ENCODE measurements at regions of chr3 and their contacts with region 1.

Region 1: DNA sequence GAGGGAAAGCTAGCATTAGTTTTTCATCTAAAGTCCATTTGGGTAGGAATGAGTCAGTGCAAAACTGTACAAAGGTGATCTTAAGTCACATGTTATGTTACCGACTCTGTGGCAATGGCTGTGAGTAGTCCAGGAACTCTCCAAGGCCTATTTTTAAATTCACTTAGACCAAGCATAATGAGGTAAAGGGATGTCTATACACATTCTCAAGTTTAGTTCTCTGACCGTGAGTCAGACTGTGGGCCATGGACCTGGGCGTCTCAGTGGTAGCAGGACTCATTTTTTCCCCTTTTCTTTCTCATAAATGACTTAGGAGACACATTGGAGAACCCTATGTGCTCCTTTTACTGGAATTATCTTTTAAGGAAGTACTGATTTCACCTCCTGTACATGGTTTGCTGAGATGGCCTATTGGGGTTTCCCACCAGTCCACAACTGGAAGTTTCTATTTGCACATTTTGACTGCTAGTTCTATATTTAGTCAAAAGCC is 488.7 kb upstream of the TPRG1 start:
- DNase-seq: peak; percentile 17 to 91
- H3K4me3 ChIP-seq: no peak overlapping the region
- H3K27ac ChIP-seq: peak overlapping the region; percentile 68 to 83
- H3K4me1 ChIP-seq: peaks cover 17 to 48% of the 10 kb centered on the region in 2 donors
- H3K27me3 ChIP-seq: no peaks in the 10 kb centered on the region
- CTCF ChIP-seq: no peak

Region 2: GRCh38 chr3:188383748-188384147 is 299.3 kb before region 1 on chr3:
- intact Hi-C with region 1: no loop called
- DNase-seq: no peak
- H3K4me3 ChIP-seq: no peak overlapping the region
- H3K27ac ChIP-seq: no peak overlapping the region
- H3K4me1 ChIP-seq: peaks cover 2 to 39% of the 10 kb centered on the region in 2 donors
- H3K27me3 ChIP-seq: no peaks in the 10 kb centered on the region
- CTCF ChIP-seq: no peak

Region 3: DNA sequence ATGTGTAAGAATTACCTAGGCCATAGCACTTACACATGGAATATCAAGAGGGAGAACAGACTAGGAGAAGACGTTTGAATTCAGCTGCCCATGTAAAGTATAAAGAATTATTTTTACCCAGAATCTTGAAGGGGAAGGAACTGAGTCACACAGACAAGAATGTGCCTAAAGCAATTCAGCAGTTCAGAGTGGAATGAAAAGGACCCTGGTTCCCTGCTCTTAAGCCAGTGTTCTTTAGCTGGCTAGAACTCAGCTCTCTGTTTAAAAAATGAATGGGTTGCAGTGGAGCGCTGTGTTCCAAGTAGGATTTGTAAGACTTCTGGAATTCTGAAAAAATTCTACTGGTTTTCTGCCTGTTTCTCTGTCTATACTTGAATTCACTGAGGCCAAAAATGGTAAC is 88.9 kb before region 1 on chr3:
- intact Hi-C with region 1: loop called (anchors 10 kb)
- DNase-seq: peak in 1 of 2 donors; percentile 76
- H3K4me3 ChIP-seq: no peak overlapping the region
- H3K27ac ChIP-seq: peak overlapping the region; percentile 72 to 76
- H3K4me1 ChIP-seq: peaks cover 13 to 63% of the 10 kb centered on the region in 2 donors
- H3K27me3 ChIP-seq: no peaks in the 10 kb centered on the region
- CTCF ChIP-seq: no peak

Region 4: DNA sequence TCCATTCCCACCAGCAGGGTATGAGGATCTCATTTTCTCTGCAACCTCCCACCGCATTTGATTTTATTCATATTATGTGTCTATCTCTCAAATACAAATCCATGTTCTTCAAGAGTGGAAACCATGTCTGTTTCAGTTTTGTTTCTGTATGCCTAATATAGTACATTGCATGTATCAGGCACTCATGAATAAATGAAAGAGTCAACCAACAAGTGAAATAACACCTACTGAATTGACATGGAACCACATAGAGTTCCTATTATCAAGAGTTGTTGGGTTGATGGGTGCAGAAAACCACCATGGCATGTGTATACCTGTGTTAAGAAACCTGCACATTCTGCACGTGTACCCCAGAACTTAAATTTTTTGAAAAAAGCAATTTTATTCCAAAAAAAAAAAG is 62.3 kb before region 1 on chr3:
- intact Hi-C with region 1: no loop called
- DNase-seq: no peak
- H3K4me3 ChIP-seq: no peak overlapping the region
- H3K27ac ChIP-seq: no peak overlapping the region
- H3K4me1 ChIP-seq: peaks cover 0 to 23% of the 10 kb centered on the region in 2 donors
- H3K27me3 ChIP-seq: no peaks in the 10 kb centered on the region
- CTCF ChIP-seq: no peak